Caco-2 (cell line): ENCODE measurements at regions of chr1 and their contacts with region 1.

Region 1: DNA sequence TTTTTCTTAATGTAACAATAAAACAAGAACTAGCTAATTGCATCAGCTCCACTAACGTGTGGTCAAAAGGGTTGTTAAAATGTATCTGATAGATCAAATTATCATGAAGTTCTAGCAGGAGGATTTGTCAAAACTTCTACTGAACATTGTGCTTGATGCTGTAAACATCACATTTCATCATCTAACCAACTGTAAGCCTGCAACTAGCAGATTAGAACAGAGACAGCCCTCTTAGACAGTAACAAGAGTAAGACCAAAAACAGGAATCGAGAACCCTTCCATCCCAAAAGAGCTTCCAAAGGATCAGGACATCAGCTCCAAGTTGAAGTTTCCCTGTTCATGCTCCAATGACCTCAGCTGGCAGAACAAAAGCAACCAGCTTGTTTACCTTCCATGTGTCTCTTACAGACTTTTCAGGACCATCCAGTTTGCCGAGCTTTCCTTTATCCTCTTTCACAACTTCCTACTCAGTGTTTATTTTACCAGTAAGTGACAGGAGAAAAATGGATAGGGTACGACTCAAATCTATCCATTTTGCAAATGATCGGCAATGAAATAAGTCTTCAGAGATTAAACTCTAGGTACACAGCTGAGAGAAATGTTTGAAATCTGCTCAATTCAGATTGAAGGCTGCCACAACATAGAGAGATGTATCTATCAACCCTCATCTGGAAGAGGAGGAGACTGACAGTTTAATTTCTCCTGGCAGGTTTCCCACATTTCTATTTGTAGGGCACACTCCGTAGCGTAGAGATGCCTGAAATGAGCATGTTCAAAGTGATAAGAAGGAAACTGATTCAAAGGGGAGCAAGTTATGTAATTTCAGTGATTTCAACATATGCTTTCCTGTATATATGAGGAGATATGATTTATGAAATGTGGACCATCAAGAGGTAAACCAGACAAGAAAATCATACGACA is 44.3 kb downstream of the NIBAN1 start:
- DNase-seq: peak in 1 of 2 experiments; percentile 69
- H3K4me3 ChIP-seq: no peak overlapping the region
- H3K4me3 Mint-ChIP-seq: peak overlapping the region; percentile 52
- H3K27ac Mint-ChIP-seq: peak overlapping the region; percentile 22
- H3K4me1 ChIP-seq: peaks cover 10% of the 10 kb centered on the region; the same call in 1 of the 2 replicates
- H3K4me1 Mint-ChIP-seq: peaks cover 13% of the 10 kb centered on the region
- H3K27me3 ChIP-seq: no peaks in the 10 kb centered on the region
- H3K27me3 Mint-ChIP-seq: no peaks in the 10 kb centered on the region
- CTCF ChIP-seq: no peak

Region 2: DNA sequence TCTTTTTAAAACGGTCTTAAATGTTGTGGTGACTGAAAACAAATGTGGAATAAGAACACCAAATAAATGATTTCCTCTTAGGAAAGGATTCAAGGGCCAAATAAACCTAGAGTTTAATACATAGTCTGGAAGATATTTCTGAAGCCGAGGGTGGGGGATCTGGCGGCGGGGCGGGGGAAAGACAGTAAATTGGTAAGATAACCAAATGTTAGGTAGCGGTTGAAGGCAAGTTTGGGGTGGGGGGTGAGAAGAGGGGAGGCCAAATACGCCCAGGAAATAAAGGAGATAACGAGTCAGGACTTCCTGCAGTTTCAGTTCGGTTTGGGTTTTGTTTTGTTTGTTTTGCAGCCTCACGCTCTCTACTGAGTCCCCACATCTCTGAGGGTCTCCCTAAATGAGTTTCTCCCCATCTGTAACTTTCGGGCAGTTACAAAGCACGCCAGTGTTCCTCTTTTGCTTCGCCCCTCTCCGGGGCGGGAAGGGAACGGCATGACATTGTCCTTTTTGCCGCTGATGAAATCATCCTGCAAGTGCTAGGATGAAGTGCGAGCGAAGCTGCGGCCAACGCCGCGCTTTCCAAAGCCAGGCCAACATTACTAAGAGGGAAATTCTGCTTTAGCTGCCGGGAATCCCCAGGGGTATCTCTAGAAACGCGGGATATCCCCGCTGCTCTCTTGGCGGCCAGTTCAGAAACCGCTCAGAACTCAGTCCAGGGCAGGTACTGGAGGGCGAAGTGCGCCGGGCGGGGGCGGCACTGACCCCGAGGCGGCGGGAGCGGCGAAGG is 43.5 kb after region 1 on chr1:
- CTCF ChIA-PET with region 1: no interaction called
- POLR2A ChIA-PET with region 1: no interaction called
- intact Hi-C with region 1: loop called (anchors 2 kb)
- DNase-seq: peak; percentile 35 to 62
- H3K4me3 ChIP-seq: peak overlapping the region; percentile 33
- H3K4me3 Mint-ChIP-seq: peak overlapping the region; percentile 82
- H3K27ac Mint-ChIP-seq: peak overlapping the region; percentile 94
- H3K4me1 ChIP-seq: 0 out of 2 replicates have a peak, but pooled peaks cover 6% of the 10 kb centered on the region
- H3K4me1 Mint-ChIP-seq: peaks cover 12% of the 10 kb centered on the region
- H3K27me3 ChIP-seq: no peaks in the 10 kb centered on the region; the same call in 1 of the 2 replicates
- H3K27me3 Mint-ChIP-seq: peaks cover 2% of the 10 kb centered on the region
- CTCF ChIP-seq: no peak